Activated T-helper 2 cell treated with anti-CD3 and anti-CD28 coated beads, Interferon-gamma antibody, Interleukin-2, Interleukin-4, amounts not matched to agents 10 μg/mL and 5 μg/mL and 100 μg/mL, durations not matched to agents 14 hours and 24 hours and 36 hours (primary cell): ENCODE measurements at regions of chr9 and their contacts with region 1.

Region 1: GRCh38 chr9:19102631-19103345 is at the start of gene HAUS6:
- DNase-seq: peak; percentile 94
- H3K4me3 Mint-ChIP-seq: peak within 1 kb of the TSS; percentile 93
- H3K27ac Mint-ChIP-seq: peak within 1 kb of the TSS; percentile 92
- H3K4me1 Mint-ChIP-seq: peaks cover 18% of the 10 kb centered on the region
- H3K27me3 Mint-ChIP-seq: no peaks in the 10 kb centered on the region
- total RNA-seq, gene HAUS6: 28.3 and 31.6 TPM in 2 replicates

Region 2: DNA sequence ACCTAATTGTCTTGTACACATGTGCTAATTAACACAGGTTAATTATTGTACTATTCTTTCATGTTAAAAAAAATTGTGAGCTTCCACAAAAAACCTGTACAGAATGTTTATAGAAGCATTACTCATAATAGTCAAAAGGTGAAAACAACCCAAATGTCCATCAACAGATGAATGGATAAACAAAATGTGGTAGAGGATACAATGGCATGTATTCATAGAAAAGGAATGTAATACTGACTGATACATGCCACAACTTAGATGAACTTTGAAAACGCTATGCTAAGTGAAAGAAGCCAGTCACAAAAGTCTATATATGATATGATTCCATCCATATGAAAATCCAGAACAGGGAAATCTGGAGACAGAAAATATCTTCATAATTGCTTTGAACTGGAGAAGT is 28.0 kb before region 1 on chr9:
- intact Hi-C with region 1: no loop called
- DNase-seq: no peak
- H3K4me3 Mint-ChIP-seq: no peak overlapping the region
- H3K27ac Mint-ChIP-seq: peak overlapping the region; percentile 1
- H3K4me1 Mint-ChIP-seq: peaks cover 4% of the 10 kb centered on the region
- H3K27me3 Mint-ChIP-seq: no peaks in the 10 kb centered on the region

Region 3: GRCh38 chr9:19127881-19128500 is 25.2 kb after region 1 on chr9:
- intact Hi-C with region 1: loop called (anchors 1 kb)
- DNase-seq: peak; percentile 26
- H3K4me3 Mint-ChIP-seq: peak overlapping the region; percentile 88
- H3K27ac Mint-ChIP-seq: peak overlapping the region; percentile 94
- H3K4me1 Mint-ChIP-seq: peaks cover 53% of the 10 kb centered on the region
- H3K27me3 Mint-ChIP-seq: no peaks in the 10 kb centered on the region

Region 4: GRCh38 chr9:19174127-19174912 is 71.5 kb after region 1 on chr9:
- intact Hi-C with region 1: loop called (anchors 1 kb)
- DNase-seq: peak; percentile 21
- H3K4me3 Mint-ChIP-seq: peak overlapping the region; percentile 9
- H3K27ac Mint-ChIP-seq: peak overlapping the region; percentile 46
- H3K4me1 Mint-ChIP-seq: peaks cover 29% of the 10 kb centered on the region
- H3K27me3 Mint-ChIP-seq: no peaks in the 10 kb centered on the region

Region 5: DNA sequence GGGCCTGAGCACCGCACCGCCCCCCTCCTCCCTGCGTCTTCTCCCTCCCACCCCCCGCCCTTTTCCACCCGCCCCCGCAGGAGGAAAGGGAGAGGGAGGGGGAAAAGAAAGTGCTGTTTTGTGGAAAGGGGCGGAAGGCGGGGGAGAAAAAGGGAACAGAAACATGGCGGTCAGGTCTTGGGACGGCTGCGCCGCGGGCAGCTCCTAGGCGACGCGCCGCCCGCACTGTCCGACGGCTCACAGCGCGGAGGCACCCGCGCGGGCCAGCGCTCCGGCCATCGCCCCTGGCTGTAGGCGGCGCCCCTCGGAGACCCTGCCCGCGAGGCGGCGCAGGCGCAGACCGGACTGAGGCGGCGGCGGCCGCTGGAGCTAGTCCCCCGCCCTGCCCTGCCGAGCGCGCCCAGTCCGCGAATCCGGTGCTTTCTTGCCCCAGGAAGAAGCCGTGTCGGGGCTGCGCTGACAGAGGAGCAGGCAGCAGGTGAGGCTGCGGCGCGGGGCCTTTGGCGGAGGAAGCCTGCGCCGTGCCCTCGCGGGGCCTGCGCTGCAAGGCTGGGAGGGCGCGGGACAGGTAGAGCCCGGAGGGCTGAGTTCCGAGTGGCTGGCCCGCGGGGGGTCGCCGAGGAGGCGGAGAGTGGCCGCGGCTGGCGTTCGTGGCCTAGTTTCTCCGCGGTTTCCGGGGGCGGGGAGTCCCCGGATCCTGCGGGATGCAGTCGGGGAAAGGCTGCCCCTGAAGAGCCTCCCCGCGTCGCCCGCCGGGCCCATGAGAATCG is 127.8 kb after region 1 on chr9 and contains the start of gene DENND4C:
- intact Hi-C with region 1: loop called (anchors 2 kb)
- DNase-seq: peak; percentile 82
- H3K4me3 Mint-ChIP-seq: peak within 1 kb of the TSS; percentile 76
- H3K27ac Mint-ChIP-seq: peak within 1 kb of the TSS; percentile 69
- H3K4me1 Mint-ChIP-seq: peaks cover 12% of the 10 kb centered on the region
- H3K27me3 Mint-ChIP-seq: no peaks in the 10 kb centered on the region
- total RNA-seq, gene DENND4C: 19.0 and 25.0 TPM in 2 replicates

Region 6: GRCh38 chr9:19456996-19457692 is 354.4 kb after region 1 on chr9:
- intact Hi-C with region 1: loop called (anchors 5 kb)
- DNase-seq: peak; percentile 58
- H3K4me3 Mint-ChIP-seq: peak overlapping the region; percentile 63
- H3K27ac Mint-ChIP-seq: no peak overlapping the region
- H3K4me1 Mint-ChIP-seq: peaks cover 10% of the 10 kb centered on the region
- H3K27me3 Mint-ChIP-seq: peaks cover 1% of the 10 kb centered on the region